ENCODE measurements at regions of chr9 and their contacts with region 1.

Region 1: DNA sequence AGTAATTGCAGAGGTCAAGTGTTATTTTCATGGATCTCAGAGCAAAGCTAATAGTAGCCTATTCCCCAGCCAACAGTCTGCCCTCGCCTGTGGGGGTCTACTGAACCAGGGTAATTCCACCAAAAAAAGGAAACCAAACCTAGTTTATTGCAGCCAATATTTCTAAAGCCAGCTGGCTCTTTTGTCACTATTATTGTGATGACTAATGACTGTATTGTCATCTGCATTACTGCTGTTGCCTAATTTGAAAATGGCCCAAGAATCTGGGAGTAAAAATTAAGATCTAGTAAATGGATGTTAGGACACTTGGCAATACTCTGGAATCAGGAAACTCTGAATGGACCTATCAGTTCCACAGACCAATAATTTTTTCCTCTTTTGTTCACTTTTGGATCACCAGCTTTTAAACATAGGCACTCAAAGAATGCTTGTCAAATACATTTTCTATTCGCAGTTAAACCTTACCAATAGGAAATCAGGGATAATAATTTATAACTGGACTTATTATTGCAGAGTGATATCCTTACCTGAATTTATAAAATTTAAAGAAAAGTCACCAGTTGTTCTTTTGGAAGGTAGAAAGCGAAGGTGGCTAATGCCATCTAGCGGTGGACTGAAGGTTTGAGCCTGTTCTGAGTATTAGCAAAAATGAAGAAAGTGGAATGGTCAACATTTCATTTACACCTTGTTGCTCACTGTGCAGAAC is 69.2 kb downstream of the SYK start:
- DNase-seq: peak; percentile 52
- CTCF ChIP-seq: peak; percentile 70

Region 2: DNA sequence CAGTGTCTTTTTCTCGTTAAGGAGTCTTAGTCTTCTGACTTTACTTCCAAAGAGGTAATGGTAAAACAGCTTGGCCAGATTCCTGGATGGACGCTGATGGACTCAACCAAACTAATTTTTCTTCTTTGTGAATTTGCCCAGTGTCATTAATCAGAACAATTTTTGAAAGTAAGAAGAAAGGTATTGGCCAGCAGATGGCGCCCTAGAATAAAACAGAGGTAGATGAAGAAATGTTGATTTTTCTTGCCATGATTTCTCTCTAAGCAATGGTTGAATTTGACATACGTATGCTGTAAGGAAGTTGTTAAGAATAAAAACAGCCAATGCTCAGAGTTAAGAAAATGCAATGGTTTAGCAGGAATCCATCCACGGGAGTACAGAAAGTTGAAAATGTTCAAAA is 728.2 kb before region 1 on chr9:
- in situ Hi-C with region 1: loop called (anchors 25 kb)
- DNase-seq: peak; percentile 36
- CTCF ChIP-seq: peak; percentile 31

Region 3: GRCh38 chr9:90240541-90240940 is 630.2 kb before region 1 on chr9:
- in situ Hi-C with region 1: loop called (anchors 25 kb)
- DNase-seq: no peak
- CTCF ChIP-seq: no peak

Region 4: DNA sequence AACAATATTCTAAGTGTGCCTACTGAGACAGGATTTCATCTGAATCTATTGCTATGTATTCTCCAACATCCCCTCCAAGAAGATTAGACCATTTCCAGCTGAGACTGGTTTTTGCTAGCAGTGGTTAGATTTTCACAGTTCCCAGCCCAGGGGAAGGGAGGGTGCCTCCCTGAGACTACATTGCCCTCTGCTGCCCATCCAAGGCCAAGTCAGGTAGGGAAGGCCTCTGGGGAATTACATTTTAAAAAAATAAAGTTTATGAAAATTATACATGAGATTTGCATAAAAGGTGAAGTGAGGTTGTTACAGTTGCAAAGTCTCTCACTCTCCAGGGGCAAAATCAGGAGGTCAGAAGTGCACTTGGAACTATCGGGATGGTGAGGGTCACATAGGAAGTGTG is 97.2 kb before region 1 on chr9:
- in situ Hi-C with region 1: loop called (anchors 10 kb)
- DNase-seq: peak; percentile 20
- CTCF ChIP-seq: peak; percentile 27

Region 5: GRCh38 chr9:90925581-90926257 is 54.9 kb after region 1 on chr9:
- in situ Hi-C with region 1: no loop called
- DNase-seq: no peak
- CTCF ChIP-seq: no peak

Region 6: DNA sequence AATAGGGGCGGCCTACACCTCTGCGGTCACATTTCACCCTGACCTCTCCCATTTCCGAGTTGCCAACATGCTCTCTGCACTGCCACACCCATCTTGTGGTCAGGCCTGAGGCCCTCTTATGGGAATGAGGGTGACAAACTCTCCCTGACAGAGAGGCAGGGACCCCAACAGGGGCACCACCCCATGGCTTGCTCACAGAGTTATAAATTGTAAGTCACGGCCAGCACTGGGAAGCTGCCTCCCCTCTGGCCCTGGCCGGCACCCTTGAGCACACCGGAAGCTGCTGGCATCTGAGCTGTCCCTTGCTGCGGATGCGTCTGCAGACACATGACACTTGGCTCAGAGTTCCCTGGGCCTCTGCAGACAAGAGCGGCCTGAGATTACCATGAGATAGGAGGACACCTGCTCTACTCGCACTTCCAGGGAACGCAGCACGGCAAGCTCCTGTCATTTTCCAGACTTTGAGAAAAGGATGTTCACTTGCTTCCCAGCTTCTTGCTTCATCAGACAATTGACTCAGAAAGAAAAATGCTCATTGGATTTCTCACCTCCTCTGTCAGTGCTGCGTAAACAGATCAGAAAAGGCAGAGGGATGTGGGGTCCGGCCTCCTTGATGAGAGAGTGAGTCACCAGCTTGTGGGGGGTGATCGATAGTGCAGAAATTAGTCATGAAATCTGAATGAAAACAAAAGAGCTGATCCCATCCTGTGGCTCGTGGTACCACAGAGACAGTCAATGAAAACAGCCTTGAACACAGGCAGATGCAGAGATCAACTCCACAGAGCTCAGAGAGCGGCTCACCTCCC is 200.6 kb after region 1 on chr9:
- in situ Hi-C with region 1: no loop called
- DNase-seq: peak; percentile 45
- CTCF ChIP-seq: no peak